Activated CD4-positive, alpha-beta memory T cell treated with anti-CD3 and anti-CD28 coated beads, Interleukin-2, amount 10 ng/mL, durations not matched to agents 7 days and 5 days (primary cell): ENCODE measurements at regions of chr6 and their contacts with region 1.

Region 1: DNA sequence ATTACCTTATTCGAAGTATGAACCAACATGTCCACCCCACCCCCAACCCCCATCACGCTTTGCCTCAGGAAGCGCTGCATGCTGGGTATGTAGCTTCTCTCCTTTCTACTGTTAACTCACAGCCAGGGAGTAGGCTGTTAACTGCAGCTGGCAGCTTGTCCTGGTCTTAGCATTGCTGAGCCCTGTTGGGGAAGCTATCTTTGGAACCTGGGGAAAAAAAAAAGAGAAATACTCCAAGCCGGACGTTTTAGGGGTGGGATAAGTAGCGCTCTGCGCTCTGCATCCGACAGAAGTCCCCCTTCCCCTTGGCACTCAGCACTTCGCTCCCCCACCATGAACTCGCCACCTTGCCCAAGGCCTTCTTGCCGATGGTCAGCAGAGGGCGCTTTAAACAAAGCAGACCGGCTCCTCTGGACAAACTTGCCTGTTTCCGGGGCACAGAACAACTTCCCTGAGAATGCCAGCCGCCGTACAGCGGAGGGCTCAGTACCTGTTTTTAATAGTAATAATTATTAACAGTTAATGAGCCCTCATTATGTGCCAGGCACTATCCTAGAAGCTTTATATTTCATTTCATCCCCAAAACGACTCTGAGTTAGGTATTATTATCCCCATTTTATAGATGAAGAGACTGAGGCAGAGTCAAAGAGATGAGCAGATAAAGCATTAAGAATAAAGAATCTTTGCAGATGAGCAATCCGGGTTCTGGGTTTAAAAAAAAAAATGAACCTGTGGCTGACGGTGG is 35.2 kb upstream of the MDFI start:
- DNase-seq: peak; percentile 77
- H3K4me3 Mint-ChIP-seq: no peak overlapping the region
- H3K27ac Mint-ChIP-seq: no peak overlapping the region
- H3K4me1 Mint-ChIP-seq: peaks cover 6% of the 10 kb centered on the region
- H3K27me3 Mint-ChIP-seq: no peaks in the 10 kb centered on the region

Region 2: GRCh38 chr6:41638002-41638934 is 35.2 kb after region 1 on chr6 and contains the start of gene MDFI:
- CTCF ChIA-PET with region 1: no interaction called
- POLR2A ChIA-PET with region 1: no interaction called
- DNase-seq: no peak
- H3K4me3 Mint-ChIP-seq: no peak within 1 kb of the TSS
- H3K27ac Mint-ChIP-seq: no peak within 1 kb of the TSS
- H3K4me1 Mint-ChIP-seq: peaks cover 5% of the 10 kb centered on the region
- H3K27me3 Mint-ChIP-seq: peaks cover 64% of the 10 kb centered on the region
- total RNA-seq, gene MDFI: not detected

Region 3: GRCh38 chr6:41683510-41684310 is 80.7 kb after region 1 on chr6:
- CTCF ChIA-PET with region 1: interaction called, 28 read pairs
- POLR2A ChIA-PET with region 1: no interaction called
- DNase-seq: peak; percentile 79
- H3K4me3 Mint-ChIP-seq: peak overlapping the region; percentile 55
- H3K27ac Mint-ChIP-seq: peak overlapping the region; percentile 52
- H3K4me1 Mint-ChIP-seq: peaks cover 8% of the 10 kb centered on the region
- H3K27me3 Mint-ChIP-seq: no peaks in the 10 kb centered on the region